GM10248 (cell line): ENCODE measurements at regions of chr2 and their contacts with region 1.

Region 1: DNA sequence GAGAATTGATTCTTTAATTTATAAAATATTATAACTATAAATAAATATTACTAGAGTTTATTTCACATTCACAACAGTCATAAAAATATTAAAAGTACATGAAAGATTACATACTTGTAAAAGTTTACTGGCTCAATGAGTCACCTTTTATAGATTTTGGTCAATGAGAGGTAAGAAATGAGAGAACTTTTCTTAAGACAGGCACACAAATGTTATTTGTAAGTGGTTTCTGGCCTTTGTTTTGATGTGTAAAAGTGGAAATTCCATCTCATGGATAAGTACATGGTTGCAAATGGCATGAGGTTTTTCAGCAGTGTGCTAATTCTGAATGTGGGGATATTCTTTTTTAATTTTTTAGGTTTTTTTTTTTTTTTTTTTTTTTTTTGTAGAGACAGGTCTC is 63.8 kb downstream of the TTC27 start:
- DNase-seq: no peak
- CTCF ChIP-seq: no peak

Region 2: DNA sequence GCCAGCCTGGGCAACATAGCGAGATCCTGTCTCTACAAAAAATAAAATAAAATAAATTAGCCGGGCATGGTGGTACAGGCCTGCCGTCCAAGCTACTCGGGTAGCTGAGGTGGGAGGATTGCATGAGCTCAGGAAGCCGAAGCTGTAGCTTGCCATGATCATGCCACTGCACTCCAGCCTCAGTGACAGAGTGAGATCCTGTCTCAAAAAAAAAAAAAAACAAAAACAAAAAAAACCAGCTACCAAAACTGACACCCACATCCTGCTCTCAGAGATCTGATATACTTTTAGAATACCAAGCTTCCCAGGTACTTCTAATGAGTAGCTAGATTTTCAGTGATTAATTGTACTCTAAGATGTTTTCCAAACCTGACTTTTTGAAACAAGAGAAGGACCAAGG is 10.1 kb after region 1 on chr2:
- CTCF ChIA-PET with region 1: interaction called, 3 read pairs
- POLR2A ChIA-PET with region 1: interaction called, 10 read pairs
- DNase-seq: no peak
- CTCF ChIP-seq: no peak

Region 3: DNA sequence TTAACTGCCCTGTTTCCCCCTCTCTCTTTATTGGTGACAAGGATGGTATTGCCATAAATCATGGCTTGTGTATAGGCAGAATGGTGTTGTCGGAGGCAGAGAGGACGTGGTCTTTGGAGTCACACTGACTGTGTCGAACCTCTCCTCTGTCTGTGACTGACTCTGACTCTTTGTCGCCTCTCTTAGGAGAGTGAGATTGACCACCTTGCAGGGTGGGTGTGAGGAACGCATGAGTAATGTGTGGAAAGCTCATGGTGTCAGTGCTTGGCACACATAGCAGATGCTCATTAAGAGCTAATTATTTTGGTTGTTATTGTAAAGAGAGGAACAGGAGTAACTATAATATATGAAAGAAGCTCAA is 81.8 kb after region 1 on chr2:
- CTCF ChIA-PET with region 1: no interaction called
- POLR2A ChIA-PET with region 1: no interaction called
- DNase-seq: no peak
- CTCF ChIP-seq: no peak